Endothelial cell of umbilical vein (primary cell): ENCODE measurements at regions of chr12 and their contacts with region 1.

Region 1: GRCh38 chr12:124379938-124380754 is 85.3 kb downstream of the RFLNA start:
- DNase-seq: peak; percentile 93
- H3K4me3 ChIP-seq: no peak overlapping the region
- H3K27ac ChIP-seq: peak overlapping the region; percentile 93
- H3K4me1 ChIP-seq: peaks cover 62% of the 10 kb centered on the region
- H3K27me3 ChIP-seq: no peaks in the 10 kb centered on the region
- CTCF ChIP-seq: peak; percentile 43 to 54
- POLR2A ChIP-seq: peak; percentile 80

Region 2: DNA sequence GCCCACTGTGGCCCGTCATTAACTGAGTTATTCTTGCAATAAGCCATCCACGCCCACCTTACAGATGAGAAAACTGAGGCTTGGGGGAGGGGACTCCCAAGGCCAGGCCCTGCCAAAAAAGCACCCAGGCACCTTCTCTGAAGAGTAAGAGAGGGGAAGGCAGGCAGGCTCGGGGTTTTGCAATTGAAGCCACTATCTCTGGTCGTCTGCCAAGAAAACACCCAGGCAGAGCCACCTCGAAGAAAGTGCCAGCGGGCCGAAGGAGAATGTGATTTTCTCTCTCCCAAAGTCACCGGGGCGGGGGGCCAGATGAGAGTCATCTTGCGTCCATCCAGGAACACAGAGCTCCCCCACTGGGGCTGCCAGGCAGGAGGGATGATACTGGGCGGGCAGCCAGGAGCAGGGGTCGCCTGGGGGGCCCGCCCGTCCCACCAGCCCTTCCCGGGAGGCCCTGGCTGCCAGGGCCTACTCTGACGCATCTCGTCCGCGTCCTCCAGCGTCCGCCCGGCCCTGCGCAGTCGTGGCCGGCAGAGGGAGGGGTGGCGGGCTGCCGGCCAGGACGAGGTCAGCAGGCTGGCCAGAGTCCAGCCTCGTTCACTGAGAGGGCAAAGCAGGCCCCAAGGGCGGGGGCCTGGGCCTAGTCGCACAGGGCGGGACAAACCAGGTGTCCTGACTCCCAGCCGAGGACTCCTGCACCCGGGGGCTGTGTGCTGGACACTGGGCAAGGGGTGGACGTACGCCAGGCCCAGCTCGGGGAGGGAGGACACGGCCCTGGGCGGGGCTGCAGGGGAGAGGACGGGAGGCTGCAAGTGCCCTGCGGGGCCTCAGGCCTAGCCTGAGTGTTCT is 10.9 kb before region 1 on chr12:
- CTCF ChIA-PET with region 1: interaction called, 15 read pairs
- POLR2A ChIA-PET with region 1: no interaction called
- dilution Hi-C with region 1: no loop called
- intact Hi-C with region 1: loop called (anchors 1 kb)
- DNase-seq: peak; percentile 90
- H3K4me3 ChIP-seq: no peak overlapping the region
- H3K27ac ChIP-seq: peak overlapping the region; percentile 61
- H3K4me1 ChIP-seq: peaks cover 29% of the 10 kb centered on the region
- H3K27me3 ChIP-seq: no peaks in the 10 kb centered on the region
- CTCF ChIP-seq: peak; percentile 31 to 60
- POLR2A ChIP-seq: no peak

Region 3: GRCh38 chr12:124399622-124400021 is 19.5 kb after region 1 on chr12:
- CTCF ChIA-PET with region 1: interaction called, 60 read pairs
- POLR2A ChIA-PET with region 1: interaction called, 3 read pairs
- dilution Hi-C with region 1: no loop called
- intact Hi-C with region 1: no loop called
- DNase-seq: peak; percentile 49
- H3K4me3 ChIP-seq: no peak overlapping the region
- H3K27ac ChIP-seq: no peak overlapping the region
- H3K4me1 ChIP-seq: peaks cover 8% of the 10 kb centered on the region
- H3K27me3 ChIP-seq: no peaks in the 10 kb centered on the region
- CTCF ChIP-seq: peak; percentile 75 to 76
- POLR2A ChIP-seq: no peak

Region 4: GRCh38 chr12:124422570-124423523 is 42.7 kb after region 1 on chr12:
- CTCF ChIA-PET with region 1: interaction called, 9 read pairs
- POLR2A ChIA-PET with region 1: no interaction called
- dilution Hi-C with region 1: no loop called
- intact Hi-C with region 1: loop called (anchors 1 kb)
- DNase-seq: peak; percentile 90
- H3K4me3 ChIP-seq: no peak overlapping the region
- H3K27ac ChIP-seq: peak overlapping the region; percentile 98
- H3K4me1 ChIP-seq: peaks cover 28% of the 10 kb centered on the region
- H3K27me3 ChIP-seq: no peaks in the 10 kb centered on the region
- CTCF ChIP-seq: no peak
- POLR2A ChIP-seq: peak; percentile 40

Region 5: DNA sequence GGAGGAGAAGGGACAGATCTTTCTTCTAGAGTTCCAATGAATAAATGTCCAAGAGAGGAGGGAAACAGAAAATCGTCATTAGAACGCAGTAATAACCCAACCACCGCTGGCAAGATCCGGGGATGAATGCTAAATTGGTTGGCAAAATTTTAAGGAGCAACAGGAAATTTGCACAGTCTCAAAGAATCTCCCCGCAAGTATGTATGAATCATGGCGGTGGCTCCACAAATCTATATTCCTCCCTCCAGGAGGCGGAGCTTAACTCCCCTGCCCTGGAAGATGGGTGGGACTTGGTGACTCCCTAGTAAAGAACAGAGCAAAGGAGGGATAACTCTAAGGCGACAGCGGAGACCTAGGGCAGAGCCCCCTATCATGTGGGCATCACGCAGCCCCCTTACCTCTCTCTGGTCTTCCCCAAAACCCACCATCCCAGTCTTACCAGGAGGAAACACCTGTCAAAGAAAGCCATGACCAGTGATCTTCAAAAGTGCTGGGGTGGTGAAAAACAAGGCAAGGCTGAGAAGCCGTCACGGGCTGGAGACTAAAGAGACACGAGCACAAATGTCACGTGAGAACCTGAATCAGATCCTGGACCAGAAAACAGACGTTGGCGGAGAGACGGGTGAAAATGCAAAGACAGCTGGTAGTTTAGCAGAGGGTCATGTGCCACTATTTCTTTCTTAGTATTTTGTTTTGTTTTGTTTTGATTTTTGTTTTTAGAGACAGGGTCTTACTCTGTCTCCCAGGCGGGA is 61.5 kb after region 1 on chr12:
- CTCF ChIA-PET with region 1: interaction called, 4 read pairs
- POLR2A ChIA-PET with region 1: no interaction called
- dilution Hi-C with region 1: no loop called
- intact Hi-C with region 1: loop called (anchors 1 kb)
- DNase-seq: peak; percentile 83
- H3K4me3 ChIP-seq: peak overlapping the region in 1 of 3 experiments; percentile 5
- H3K27ac ChIP-seq: peak overlapping the region; percentile 89
- H3K4me1 ChIP-seq: peaks cover 27% of the 10 kb centered on the region
- H3K27me3 ChIP-seq: no peaks in the 10 kb centered on the region
- CTCF ChIP-seq: no peak
- POLR2A ChIP-seq: peak; percentile 56

Region 6: DNA sequence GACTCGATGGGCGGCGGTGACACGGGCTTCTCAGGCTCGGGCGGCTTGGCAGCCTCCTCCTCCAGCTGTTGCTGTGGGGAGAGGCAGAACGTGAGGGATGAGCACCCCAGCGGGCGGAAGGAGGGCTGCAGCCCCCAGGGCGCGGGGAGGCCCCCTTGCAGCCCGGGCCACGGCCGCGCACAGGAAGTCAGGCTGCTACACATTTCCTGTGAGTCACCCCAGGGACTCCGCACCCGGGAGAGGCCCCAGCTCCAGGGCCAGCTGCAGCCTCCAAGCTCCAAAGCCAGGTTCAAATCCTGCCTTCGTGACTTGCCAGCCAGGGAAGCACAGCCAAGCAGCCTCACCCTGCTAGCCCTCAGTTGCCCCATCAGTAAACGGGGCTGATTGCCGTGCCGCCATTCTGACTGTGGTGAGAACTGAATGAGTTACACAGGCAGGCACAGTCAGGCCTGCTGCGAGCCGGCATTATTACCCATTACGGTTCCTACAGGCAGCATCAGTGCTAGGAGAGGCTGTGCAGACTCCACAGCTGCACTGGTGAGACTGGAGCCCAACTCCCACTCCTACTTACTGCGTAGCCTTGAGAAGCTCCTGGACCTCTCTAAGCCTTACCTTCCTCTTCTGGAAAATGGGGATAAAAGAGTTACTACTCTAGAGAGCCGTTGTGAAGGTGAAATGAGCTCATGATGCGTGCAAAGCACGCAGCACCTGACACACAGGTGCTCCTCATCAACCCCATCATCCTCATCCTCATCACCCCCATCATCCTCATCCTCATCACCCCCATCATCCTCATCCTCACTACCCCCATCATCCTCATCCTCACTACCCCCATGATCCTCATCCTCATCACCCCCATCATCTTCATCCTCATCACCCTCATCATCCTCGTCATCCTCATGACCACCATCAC is 86.3 kb after region 1 on chr12:
- CTCF ChIA-PET with region 1: interaction called, 4 read pairs
- POLR2A ChIA-PET with region 1: no interaction called
- dilution Hi-C with region 1: no loop called
- intact Hi-C with region 1: loop called (anchors 2 kb)
- DNase-seq: peak; percentile 64
- H3K4me3 ChIP-seq: no peak overlapping the region
- H3K27ac ChIP-seq: peak overlapping the region; percentile 71
- H3K4me1 ChIP-seq: peaks cover 12% of the 10 kb centered on the region
- H3K27me3 ChIP-seq: no peaks in the 10 kb centered on the region
- CTCF ChIP-seq: peak in 1 of 2 donors; percentile 17
- POLR2A ChIP-seq: no peak

Region 7: DNA sequence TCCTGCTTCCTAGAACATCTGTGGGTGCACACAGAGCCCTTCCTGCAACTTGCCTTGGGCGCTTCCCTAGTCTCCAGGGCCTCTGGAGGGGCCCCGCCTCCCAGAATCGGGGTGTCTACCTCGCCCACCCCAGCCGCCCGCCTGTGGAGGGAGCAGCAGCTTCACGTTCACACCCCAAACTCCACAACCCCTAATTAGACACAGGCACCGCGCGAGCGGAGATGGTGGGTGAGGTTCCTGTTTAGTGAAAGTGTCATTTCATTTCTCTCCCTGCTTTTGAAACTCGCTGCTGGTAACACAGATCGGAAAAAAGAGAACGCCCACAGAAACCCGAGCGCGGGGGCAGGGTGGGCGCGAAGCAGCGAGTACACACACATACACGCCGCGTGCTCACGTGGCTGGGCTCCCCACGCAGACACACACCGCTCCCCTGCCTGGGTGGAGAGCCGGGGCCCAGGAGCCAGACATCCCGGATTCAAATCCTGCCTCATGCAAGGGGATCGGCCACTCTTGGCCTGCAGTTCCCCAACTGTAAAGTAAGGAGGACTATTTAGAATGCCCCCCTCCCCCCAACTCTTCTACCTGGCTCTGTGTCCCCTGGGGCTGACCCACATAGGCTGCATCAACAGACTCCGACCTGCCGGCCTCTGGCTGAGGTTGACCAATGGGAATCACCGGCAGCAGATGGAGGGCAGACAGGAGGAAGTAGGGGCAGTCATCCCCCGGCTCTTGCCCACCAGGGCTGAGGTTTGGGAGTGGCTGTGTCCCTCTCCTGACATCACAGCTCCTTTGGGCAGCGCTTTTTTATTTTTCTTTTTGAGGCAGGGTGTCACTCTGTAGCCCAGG is 266.5 kb after region 1 on chr12:
- CTCF ChIA-PET with region 1: no interaction called
- POLR2A ChIA-PET with region 1: no interaction called
- dilution Hi-C with region 1: no loop called
- intact Hi-C with region 1: no loop called
- DNase-seq: no peak
- H3K4me3 ChIP-seq: no peak overlapping the region
- H3K27ac ChIP-seq: no peak overlapping the region
- H3K4me1 ChIP-seq: peaks cover 6% of the 10 kb centered on the region
- H3K27me3 ChIP-seq: no peaks in the 10 kb centered on the region
- CTCF ChIP-seq: no peak
- POLR2A ChIP-seq: no peak

Region 8: DNA sequence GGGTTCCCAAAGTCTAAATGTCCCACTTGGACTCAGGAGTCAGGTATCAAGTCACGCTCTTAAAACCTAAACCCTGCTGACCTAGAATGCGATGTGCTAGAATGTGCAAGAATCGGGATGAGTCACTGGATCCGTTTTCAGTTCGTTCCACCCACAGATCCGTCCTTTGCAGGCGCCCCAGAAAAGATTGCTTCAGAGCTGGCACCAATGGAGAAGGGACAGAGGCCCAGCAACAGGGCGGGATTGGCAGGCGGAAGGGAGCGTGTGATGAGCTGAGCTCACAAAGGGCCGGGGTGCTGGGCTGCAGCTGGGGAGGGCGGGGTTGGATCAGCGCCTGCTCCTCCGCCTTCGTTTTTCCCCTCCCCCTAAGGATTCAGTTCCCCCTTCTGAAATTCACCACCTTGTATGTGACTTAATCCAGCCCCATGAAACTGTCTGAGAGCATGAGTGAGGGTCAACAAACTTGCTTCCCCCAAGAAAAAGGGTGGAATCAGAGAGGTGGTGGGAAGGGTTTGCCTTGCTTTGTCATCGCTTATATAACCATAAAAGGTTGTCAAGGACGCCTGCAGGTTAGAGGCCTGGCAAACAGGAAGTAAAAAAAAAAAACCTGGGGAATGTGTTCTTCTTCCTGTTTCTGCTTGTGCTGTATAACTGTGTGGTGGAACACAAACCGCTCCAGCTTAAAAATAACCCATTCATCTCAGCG is 537.1 kb after region 1 on chr12:
- CTCF ChIA-PET with region 1: no interaction called
- POLR2A ChIA-PET with region 1: no interaction called
- dilution Hi-C with region 1: no loop called
- intact Hi-C with region 1: loop called (anchors 2 kb)
- DNase-seq: peak; percentile 100
- H3K4me3 ChIP-seq: peak overlapping the region; percentile 7 to 63 (median 21)
- H3K27ac ChIP-seq: peak overlapping the region; percentile 95
- H3K4me1 ChIP-seq: peaks cover 58% of the 10 kb centered on the region
- H3K27me3 ChIP-seq: no peaks in the 10 kb centered on the region
- CTCF ChIP-seq: no peak
- POLR2A ChIP-seq: no peak